Esophagus muscularis mucosa (tissue), 4 donors: ENCODE measurements at regions of chr12 and their contacts with region 1.

Region 1: GRCh38 chr12:27434673-27435565 is 11.6 kb upstream of the SMCO2 start:
- DNase-seq: no peak
- H3K4me3 ChIP-seq: no peak overlapping the region
- H3K27ac ChIP-seq: no peak overlapping the region
- H3K4me1 ChIP-seq: peaks cover 8 to 15% (median 9%) of the 10 kb centered on the region in 4 donors
- H3K27me3 ChIP-seq: no peaks in the 10 kb centered on the region
- CTCF ChIP-seq: peak; percentile 44 to 74 (median 69)
- EP300 ChIP-seq: no peak
- POLR2A ChIP-seq: no peak

Region 2: GRCh38 chr12:27524839-27525753 is 90.2 kb after region 1 on chr12:
- intact Hi-C with region 1: loop called (anchors 5 kb)
- DNase-seq: no peak
- H3K4me3 ChIP-seq: peak overlapping the region; percentile 68 to 78 (median 74)
- H3K27ac ChIP-seq: peak overlapping the region; percentile 83 to 94 (median 88)
- H3K4me1 ChIP-seq: peaks cover 41 to 46% (median 43%) of the 10 kb centered on the region in 4 donors
- H3K27me3 ChIP-seq: no peaks in the 10 kb centered on the region
- CTCF ChIP-seq: peak in 1 of 3 experiments; percentile 20
- EP300 ChIP-seq: no peak
- POLR2A ChIP-seq: no peak

Region 3: GRCh38 chr12:27564612-27565213 is 129.8 kb after region 1 on chr12:
- intact Hi-C with region 1: loop called (anchors 10 kb)
- DNase-seq: no peak
- H3K4me3 ChIP-seq: no peak overlapping the region
- H3K27ac ChIP-seq: peak overlapping the region in 1 of 4 donors; percentile 29
- H3K4me1 ChIP-seq: peaks cover 13 to 37% (median 30%) of the 10 kb centered on the region in 4 donors
- H3K27me3 ChIP-seq: no peaks in the 10 kb centered on the region
- CTCF ChIP-seq: no peak
- EP300 ChIP-seq: no peak
- POLR2A ChIP-seq: no peak

Region 4: DNA sequence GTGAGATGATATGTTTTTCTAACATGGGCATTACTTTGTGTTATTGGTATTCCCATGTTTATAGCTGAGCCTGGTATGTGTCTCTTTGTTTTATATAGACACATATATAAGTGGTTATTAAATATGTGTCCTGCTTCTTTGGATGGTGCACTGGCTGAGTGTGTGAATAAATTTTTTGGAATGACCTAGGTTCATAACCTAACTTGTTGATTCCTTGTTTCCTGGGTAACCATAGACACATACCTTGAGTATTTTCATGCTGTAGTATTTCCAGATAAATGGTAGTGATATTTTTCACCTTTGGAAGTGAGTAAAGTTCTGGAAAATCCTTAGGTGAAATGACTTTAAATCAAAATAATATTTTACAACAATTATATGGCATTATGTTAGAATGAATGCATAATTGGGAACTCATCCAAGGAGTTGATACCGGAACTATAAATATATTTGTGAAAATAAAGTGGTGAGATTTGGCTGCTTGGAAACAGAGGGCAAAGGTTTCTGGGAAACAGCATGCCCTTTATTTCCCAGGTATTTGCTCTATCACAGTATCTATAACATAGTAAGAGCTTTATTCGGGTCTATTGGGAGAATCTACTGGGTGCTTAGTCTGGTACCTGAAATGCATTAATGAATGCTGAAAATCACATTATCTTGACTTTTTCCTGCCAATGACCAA is 197.0 kb after region 1 on chr12:
- intact Hi-C with region 1: loop called (anchors 5 kb)
- DNase-seq: no peak
- H3K4me3 ChIP-seq: no peak overlapping the region
- H3K27ac ChIP-seq: no peak overlapping the region
- H3K4me1 ChIP-seq: peaks cover 10 to 32% (median 22%) of the 10 kb centered on the region in 4 donors
- H3K27me3 ChIP-seq: no peaks in the 10 kb centered on the region
- CTCF ChIP-seq: no peak
- EP300 ChIP-seq: no peak
- POLR2A ChIP-seq: no peak

Region 5: DNA sequence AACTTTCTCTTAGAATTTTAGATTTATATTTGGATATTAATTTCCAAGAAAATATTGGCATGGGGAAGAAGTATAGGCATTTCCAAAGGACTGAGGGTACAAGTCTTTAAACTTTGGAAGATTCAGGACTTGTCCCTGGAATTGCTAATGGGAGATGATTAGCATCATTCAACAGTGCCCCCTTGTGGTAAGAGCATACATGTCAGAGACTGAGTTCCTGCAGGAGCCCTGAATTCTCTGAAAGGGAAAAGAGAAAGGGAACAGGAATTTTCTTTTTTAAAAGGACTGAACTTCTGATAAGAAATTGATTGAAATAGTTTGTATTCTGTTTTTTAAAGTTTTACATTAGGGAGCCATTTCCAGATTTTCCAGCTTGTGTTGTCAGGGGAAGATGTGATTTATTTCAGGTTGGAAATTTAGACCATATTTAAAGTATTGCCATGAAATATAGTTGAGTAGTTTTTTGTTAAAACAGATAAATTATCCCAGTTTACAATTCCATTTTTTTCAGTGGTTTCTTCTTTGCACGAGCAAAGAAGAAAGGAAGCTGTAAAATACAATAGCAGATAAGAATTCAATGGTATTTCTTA is 217.3 kb after region 1 on chr12:
- intact Hi-C with region 1: loop called (anchors 5 kb)
- DNase-seq: no peak
- H3K4me3 ChIP-seq: no peak overlapping the region
- H3K27ac ChIP-seq: no peak overlapping the region
- H3K4me1 ChIP-seq: no peaks in the 10 kb centered on the region
- H3K27me3 ChIP-seq: no peaks in the 10 kb centered on the region
- CTCF ChIP-seq: peak; percentile 80 to 90 (median 82)
- EP300 ChIP-seq: no peak
- POLR2A ChIP-seq: no peak